Head of caudate nucleus (tissue), 42 donors: ENCODE measurements at regions of chr6 and their contacts with region 1.

Region 1: GRCh38 chr6:81894788-81895271 is 142.3 kb upstream of the TENT5A start:
- DNase-seq: peak; percentile 45 to 94 (median 85)

Region 2: GRCh38 chr6:81752138-81752920 is 142.5 kb before region 1 on chr6 and contains the start of gene TENT5A:
- intact Hi-C with region 1: loop called (anchors 5 kb)
- DNase-seq: peak; percentile 54 to 88 (median 76)

Region 3: GRCh38 chr6:81950877-81951276 is 56.0 kb after region 1 on chr6:
- intact Hi-C with region 1: no loop called
- DNase-seq: no peak